ENCODE measurements at regions of chr5 and their contacts with region 1.

Region 1: DNA sequence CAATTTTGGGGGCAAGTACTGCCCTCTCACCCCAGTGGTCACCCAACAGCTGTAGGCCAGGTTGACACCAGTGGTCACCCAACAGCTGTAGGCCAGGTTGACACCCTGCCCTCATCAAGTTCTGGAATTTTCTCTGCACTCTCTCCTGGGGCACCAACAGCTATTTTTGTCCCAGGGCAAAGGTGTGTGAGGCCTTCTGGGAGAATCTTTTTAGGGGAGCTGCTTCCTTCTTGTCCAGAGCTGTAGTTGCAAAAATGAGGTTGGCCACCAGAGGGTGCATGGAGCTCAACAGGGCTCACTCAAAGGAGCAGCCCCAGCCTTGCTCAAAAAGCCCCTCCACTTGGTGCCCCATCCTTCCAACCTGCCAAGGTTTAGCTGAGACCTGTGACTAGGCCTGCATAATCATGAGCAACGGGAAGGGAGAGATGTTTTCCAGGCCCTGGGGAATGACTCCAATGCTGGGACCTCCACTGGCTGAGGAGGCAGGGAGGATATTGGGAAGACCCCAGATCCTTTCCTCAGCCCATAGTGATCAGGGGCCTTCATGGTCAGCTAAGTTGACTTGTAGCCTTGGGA is 10.6 kb upstream of the P4HA2 start:
- DNase-seq: peak; percentile 57 to 71
- H3K4me3 ChIP-seq: no peak overlapping the region
- H3K27ac ChIP-seq: no peak overlapping the region
- H3K4me1 ChIP-seq: peaks cover 4% of the 10 kb centered on the region; the same call in 1 of the 2 replicates
- H3K27me3 ChIP-seq: no peaks in the 10 kb centered on the region
- CTCF ChIP-seq: peak; percentile 89

Region 2: GRCh38 chr5:132073231-132074013 is 164.8 kb before region 1 on chr5 and contains the start of gene CSF2:
- CTCF ChIA-PET with region 1: no interaction called
- POLR2A ChIA-PET with region 1: no interaction called
- intact Hi-C with region 1: no loop called
- DNase-seq: peak; percentile 50 to 78
- H3K4me3 ChIP-seq: no peak within 1 kb of the TSS
- H3K27ac ChIP-seq: peak within 1 kb of the TSS; percentile 83
- H3K4me1 ChIP-seq: peaks cover 40% of the 10 kb centered on the region
- H3K27me3 ChIP-seq: no peaks in the 10 kb centered on the region
- CTCF ChIP-seq: no peak
- total RNA-seq, gene CSF2: not detected in 2 replicates

Region 3: GRCh38 chr5:132251220-132251725 is 13.0 kb after region 1 on chr5:
- CTCF ChIA-PET with region 1: interaction called, 3 read pairs
- POLR2A ChIA-PET with region 1: interaction called, 12 read pairs
- intact Hi-C with region 1: no loop called
- DNase-seq: no peak
- H3K4me3 ChIP-seq: no peak overlapping the region
- H3K27ac ChIP-seq: no peak overlapping the region
- H3K4me1 ChIP-seq: peaks cover 12% of the 10 kb centered on the region
- H3K27me3 ChIP-seq: no peaks in the 10 kb centered on the region
- CTCF ChIP-seq: no peak

Region 4: DNA sequence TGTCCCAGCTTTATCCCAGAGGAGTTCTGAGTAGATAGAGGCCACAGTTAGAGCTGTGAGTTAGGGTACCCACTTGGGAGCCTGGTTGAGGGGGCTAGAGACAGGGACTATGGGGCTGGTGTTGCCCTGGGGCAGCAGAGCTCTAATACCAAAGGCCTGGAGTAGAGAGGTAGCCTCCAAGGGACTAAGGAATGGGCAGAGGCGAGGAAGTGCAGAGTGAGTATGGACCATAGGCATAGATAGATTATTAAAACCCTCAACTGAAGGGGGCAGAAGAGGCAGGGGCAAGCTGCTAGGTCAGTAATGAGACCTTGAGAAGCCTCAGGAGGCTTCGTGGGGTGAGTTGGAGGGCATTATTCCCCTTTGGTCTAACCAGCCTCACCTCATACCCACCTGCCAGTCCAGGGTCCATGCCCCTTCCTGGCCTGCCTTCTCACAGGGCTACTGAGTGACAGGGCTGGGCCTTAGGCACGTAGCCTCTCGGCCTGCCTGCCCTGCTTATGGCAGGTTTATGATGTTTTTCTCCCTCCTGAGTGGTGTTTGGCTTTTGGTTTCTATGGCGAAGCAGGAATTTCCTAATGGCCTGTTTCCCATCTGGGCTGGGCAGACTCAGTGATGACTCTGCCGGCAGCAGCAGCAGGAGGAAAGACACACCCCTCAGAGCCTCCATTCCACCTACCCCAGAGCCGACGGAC is 27.2 kb after region 1 on chr5:
- CTCF ChIA-PET with region 1: interaction called, 15 read pairs
- POLR2A ChIA-PET with region 1: no interaction called
- intact Hi-C with region 1: loop called (anchors 2 kb)
- DNase-seq: peak; percentile 87 to 91
- H3K4me3 ChIP-seq: no peak overlapping the region
- H3K27ac ChIP-seq: peak overlapping the region; percentile 58
- H3K4me1 ChIP-seq: peaks cover 47% of the 10 kb centered on the region
- H3K27me3 ChIP-seq: no peaks in the 10 kb centered on the region
- CTCF ChIP-seq: no peak; the same call in 1 of the 2 replicates

Region 5: DNA sequence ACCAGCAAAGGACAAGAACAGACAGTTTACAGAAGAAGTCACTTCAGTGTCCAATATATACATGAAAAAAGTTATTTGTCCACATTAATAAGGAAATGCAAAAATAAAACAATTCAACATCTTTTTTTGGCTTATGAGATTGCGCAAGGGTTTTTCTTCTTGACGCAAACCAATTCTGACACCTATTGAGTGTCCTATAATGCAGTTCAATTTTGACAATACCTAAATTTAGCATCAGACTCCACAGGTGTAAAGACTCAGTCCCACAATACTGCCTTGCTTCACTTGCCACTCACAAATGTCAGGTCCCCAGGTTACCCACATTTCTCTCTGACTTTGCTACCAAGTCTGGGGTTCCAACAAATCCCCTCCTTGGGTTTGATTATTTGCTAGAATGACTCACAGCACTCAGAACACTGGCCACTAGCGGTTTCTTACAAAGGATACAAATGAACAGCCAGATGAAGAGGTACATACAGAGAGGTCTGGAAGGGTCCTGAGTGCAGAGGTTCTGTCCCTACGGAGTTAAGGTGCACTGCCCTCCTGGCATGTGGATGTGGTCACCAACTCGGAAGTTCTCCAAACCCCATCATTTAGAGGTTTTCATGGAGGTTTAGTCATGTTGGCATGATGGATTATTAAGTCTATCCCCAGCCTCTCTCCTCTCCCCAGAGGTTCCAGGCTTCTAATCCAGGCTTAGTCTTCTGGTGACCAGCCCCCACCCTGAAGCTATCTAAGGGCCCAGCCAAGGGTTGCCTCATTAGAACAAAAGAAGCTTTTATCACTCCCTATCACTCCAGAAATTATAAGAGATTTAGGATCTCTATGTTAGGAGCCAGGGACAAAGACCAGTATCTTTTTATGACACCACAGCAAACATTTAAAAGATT is 104.3 kb after region 1 on chr5:
- CTCF ChIA-PET with region 1: no interaction called
- POLR2A ChIA-PET with region 1: no interaction called
- intact Hi-C with region 1: no loop called
- DNase-seq: no peak
- H3K4me3 ChIP-seq: no peak overlapping the region
- H3K27ac ChIP-seq: no peak overlapping the region
- H3K4me1 ChIP-seq: no peaks in the 10 kb centered on the region
- H3K27me3 ChIP-seq: no peaks in the 10 kb centered on the region
- CTCF ChIP-seq: no peak

Region 6: GRCh38 chr5:133240425-133241091 is 1002.3 kb after region 1 on chr5:
- CTCF ChIA-PET with region 1: no interaction called
- POLR2A ChIA-PET with region 1: interaction called, 14 read pairs
- intact Hi-C with region 1: no loop called
- DNase-seq: peak; percentile 60 to 94
- H3K4me3 ChIP-seq: no peak overlapping the region
- H3K27ac ChIP-seq: no peak overlapping the region
- H3K4me1 ChIP-seq: peaks cover 37% of the 10 kb centered on the region
- H3K27me3 ChIP-seq: no peaks in the 10 kb centered on the region
- CTCF ChIP-seq: no peak

Measured in PC-9 (cell line).